Heart left ventricle (tissue), 16 donors: ENCODE measurements at regions of chr2 and their contacts with region 1.

Region 1: GRCh38 chr2:43226558-43226954 is at the start of gene ZFP36L2:
- DNase-seq: peak; percentile 98 to 99 (median 98)
- ATAC-seq: peak; percentile 71 to 86 (median 81)
- H3K4me3 ChIP-seq: peak within 1 kb of the TSS; percentile 65 to 97 (median 84)
- H3K27ac ChIP-seq: peak within 1 kb of the TSS; percentile 96 to 99 (median 99)
- H3K4me1 ChIP-seq: peaks cover 3 to 76% (median 36%) of the 10 kb centered on the region in 12 donors
- H3K27me3 ChIP-seq: no peaks in the 10 kb centered on the region
- CTCF ChIP-seq: peak in 3 of 12 donors; percentile 10 to 25 (median 14)
- POLR2A ChIP-seq: peak; percentile 73 to 100
- total RNA-seq, gene ZFP36L2: 28.8 to 94.4 (median 44.9) TPM

Region 2: DNA sequence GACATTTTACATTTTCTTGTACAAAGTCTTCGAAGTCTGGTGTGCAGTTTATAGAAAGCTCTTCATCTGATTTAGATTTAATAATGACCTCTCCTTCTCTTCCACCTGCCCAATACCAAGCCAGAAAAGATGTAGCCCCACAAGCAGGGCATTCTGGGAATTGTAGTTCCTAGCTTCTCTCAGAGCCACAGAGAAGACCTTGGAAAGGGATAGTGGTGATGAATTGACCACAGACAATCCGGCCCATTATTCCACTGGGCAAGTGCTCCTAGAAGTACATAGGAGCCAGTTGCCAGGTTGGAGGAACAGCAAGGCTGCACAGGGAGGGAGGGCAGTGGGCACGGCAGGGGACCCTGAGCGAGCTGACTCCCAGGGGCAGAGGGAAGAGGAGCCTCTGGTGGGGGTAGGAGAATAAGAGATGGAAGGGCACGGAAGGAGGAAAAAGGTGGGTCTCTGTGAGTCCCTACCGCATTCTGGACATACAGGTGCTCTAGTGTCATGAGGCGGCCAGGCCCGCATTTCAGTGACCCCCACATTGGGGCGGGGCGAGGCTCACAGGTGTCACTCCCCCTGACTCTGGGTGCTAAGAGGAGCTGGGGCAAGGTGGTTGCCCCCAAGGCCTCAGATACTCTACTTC is 281.7 kb before region 1 on chr2:
- intact Hi-C with region 1: loop called in 8 of 10 experiments (anchors 2 to 5 kb)
- DNase-seq: no peak
- ATAC-seq: no peak
- H3K4me3 ChIP-seq: no peak overlapping the region
- H3K27ac ChIP-seq: peak overlapping the region in 1 of 12 donors; percentile 6
- H3K4me1 ChIP-seq: peaks cover 0 to 32% (median 16%) of the 10 kb centered on the region in 12 donors
- H3K27me3 ChIP-seq: no peaks in the 10 kb centered on the region
- CTCF ChIP-seq: no peak
- POLR2A ChIP-seq: no peak

Region 3: GRCh38 chr2:43070039-43070438 is 156.5 kb before region 1 on chr2:
- intact Hi-C with region 1: loop called in 5 of 10 experiments (anchors 2 to 10 kb)
- DNase-seq: peak; percentile 83 to 89 (median 86)
- ATAC-seq: peak; percentile 41 to 79 (median 55)
- H3K4me3 ChIP-seq: no peak overlapping the region
- H3K27ac ChIP-seq: peak overlapping the region in 9 of 12 donors; percentile 62 to 80 (median 72)
- H3K4me1 ChIP-seq: peaks cover 5 to 64% (median 48%) of the 10 kb centered on the region in 12 donors
- H3K27me3 ChIP-seq: no peaks in the 10 kb centered on the region
- CTCF ChIP-seq: peak in 1 of 12 donors; percentile 24
- POLR2A ChIP-seq: no peak

Region 4: GRCh38 chr2:43131024-43131889 is 95.3 kb before region 1 on chr2:
- intact Hi-C with region 1: loop called in 9 of 10 experiments (anchors 1 to 5 kb)
- DNase-seq: peak; percentile 65 to 87 (median 74)
- ATAC-seq: peak; percentile 57 to 66 (median 60)
- H3K4me3 ChIP-seq: peak overlapping the region in 1 of 12 donors; percentile 6
- H3K27ac ChIP-seq: peak overlapping the region; percentile 19 to 94 (median 60)
- H3K4me1 ChIP-seq: peaks cover 7 to 97% (median 43%) of the 10 kb centered on the region in 12 donors
- H3K27me3 ChIP-seq: no peaks in the 10 kb centered on the region
- CTCF ChIP-seq: peak; percentile 23 to 63 (median 45)
- POLR2A ChIP-seq: no peak

Region 5: GRCh38 chr2:43239981-43240761 is 13.6 kb after region 1 on chr2:
- intact Hi-C with region 1: no loop called
- DNase-seq: no peak
- ATAC-seq: peak; percentile 7 to 58 (median 28)
- H3K4me3 ChIP-seq: no peak overlapping the region
- H3K27ac ChIP-seq: peak overlapping the region in 7 of 12 donors; percentile 27 to 95 (median 54)
- H3K4me1 ChIP-seq: peaks cover 0 to 62% (median 1%) of the 10 kb centered on the region in 12 donors
- H3K27me3 ChIP-seq: no peaks in the 10 kb centered on the region
- CTCF ChIP-seq: peak in 3 of 12 donors; percentile 5 to 23 (median 6)
- POLR2A ChIP-seq: no peak

Region 6: GRCh38 chr2:43484323-43484930 is 257.9 kb after region 1 on chr2:
- intact Hi-C with region 1: loop called (anchors 1 to 5 kb)
- DNase-seq: no peak
- ATAC-seq: peak; percentile 43 to 73 (median 62)
- H3K4me3 ChIP-seq: no peak overlapping the region
- H3K27ac ChIP-seq: peak overlapping the region in 7 of 12 donors; percentile 11 to 72 (median 42)
- H3K4me1 ChIP-seq: peaks cover 0 to 56% (median 20%) of the 10 kb centered on the region in 12 donors
- H3K27me3 ChIP-seq: no peaks in the 10 kb centered on the region
- CTCF ChIP-seq: peak; percentile 56 to 84 (median 68)
- POLR2A ChIP-seq: no peak